ENCODE measurements at regions of chr3 and their contacts with region 1.

Region 1: GRCh38 chr3:18717598-18717997 is 292.5 kb upstream of the SATB1 start:
- DNase-seq: peak in 1 of 14 experiments; percentile 43
- ATAC-seq: no peak
- H3K4me3 ChIP-seq: no peak overlapping the region
- H3K4me3 Mint-ChIP-seq: peak overlapping the region; percentile 52
- H3K27ac ChIP-seq: no peak overlapping the region
- H3K27ac Mint-ChIP-seq: peak overlapping the region; percentile 65
- H3K4me1 ChIP-seq: peaks cover 38% of the 10 kb centered on the region
- H3K4me1 Mint-ChIP-seq: peaks cover 74% of the 10 kb centered on the region
- H3K27me3 ChIP-seq: no peaks in the 10 kb centered on the region
- H3K27me3 Mint-ChIP-seq: no peaks in the 10 kb centered on the region
- CTCF ChIP-seq: no peak

Region 2: GRCh38 chr3:18411541-18411940 is 306.1 kb before region 1 on chr3:
- CTCF ChIA-PET with region 1: no interaction called
- POLR2A ChIA-PET with region 1: no interaction called
- intact Hi-C with region 1: no loop called
- DNase-seq: peak in 3 of 14 experiments; percentile 43 to 62 (median 46)
- ATAC-seq: peak; percentile 72
- H3K4me3 ChIP-seq: no peak overlapping the region
- H3K4me3 Mint-ChIP-seq: peak overlapping the region; percentile 79
- H3K27ac ChIP-seq: peak overlapping the region in 1 of 2 donors; percentile 53
- H3K27ac Mint-ChIP-seq: peak overlapping the region; percentile 82
- H3K4me1 ChIP-seq: peaks cover 17% of the 10 kb centered on the region
- H3K4me1 Mint-ChIP-seq: peaks cover 89% of the 10 kb centered on the region
- H3K27me3 ChIP-seq: no peaks in the 10 kb centered on the region
- H3K27me3 Mint-ChIP-seq: no peaks in the 10 kb centered on the region
- CTCF ChIP-seq: no peak

Region 3: GRCh38 chr3:18740631-18741583 is 23.3 kb after region 1 on chr3:
- CTCF ChIA-PET with region 1: interaction called, 4 read pairs
- POLR2A ChIA-PET with region 1: interaction called, 11 read pairs
- intact Hi-C with region 1: no loop called
- DNase-seq: peak; percentile 15 to 92 (median 42)
- ATAC-seq: peak; percentile 76
- H3K4me3 ChIP-seq: peak overlapping the region; percentile 28
- H3K4me3 Mint-ChIP-seq: peak overlapping the region; percentile 76
- H3K27ac ChIP-seq: peak overlapping the region; percentile 46 to 87
- H3K27ac Mint-ChIP-seq: peak overlapping the region; percentile 90
- H3K4me1 ChIP-seq: peaks cover 38% of the 10 kb centered on the region
- H3K4me1 Mint-ChIP-seq: peaks cover 87% of the 10 kb centered on the region
- H3K27me3 ChIP-seq: no peaks in the 10 kb centered on the region
- H3K27me3 Mint-ChIP-seq: no peaks in the 10 kb centered on the region
- CTCF ChIP-seq: no peak

Region 4: GRCh38 chr3:18751514-18751913 is 33.9 kb after region 1 on chr3:
- CTCF ChIA-PET with region 1: no interaction called
- POLR2A ChIA-PET with region 1: interaction called, 4 read pairs
- intact Hi-C with region 1: loop called (anchors 5 kb)
- DNase-seq: no peak
- ATAC-seq: no peak
- H3K4me3 ChIP-seq: no peak overlapping the region
- H3K4me3 Mint-ChIP-seq: no peak overlapping the region
- H3K27ac ChIP-seq: no peak overlapping the region
- H3K27ac Mint-ChIP-seq: peak overlapping the region; percentile 65
- H3K4me1 ChIP-seq: no peaks in the 10 kb centered on the region
- H3K4me1 Mint-ChIP-seq: peaks cover 83% of the 10 kb centered on the region
- H3K27me3 ChIP-seq: no peaks in the 10 kb centered on the region
- H3K27me3 Mint-ChIP-seq: no peaks in the 10 kb centered on the region
- CTCF ChIP-seq: no peak

Region 5: DNA sequence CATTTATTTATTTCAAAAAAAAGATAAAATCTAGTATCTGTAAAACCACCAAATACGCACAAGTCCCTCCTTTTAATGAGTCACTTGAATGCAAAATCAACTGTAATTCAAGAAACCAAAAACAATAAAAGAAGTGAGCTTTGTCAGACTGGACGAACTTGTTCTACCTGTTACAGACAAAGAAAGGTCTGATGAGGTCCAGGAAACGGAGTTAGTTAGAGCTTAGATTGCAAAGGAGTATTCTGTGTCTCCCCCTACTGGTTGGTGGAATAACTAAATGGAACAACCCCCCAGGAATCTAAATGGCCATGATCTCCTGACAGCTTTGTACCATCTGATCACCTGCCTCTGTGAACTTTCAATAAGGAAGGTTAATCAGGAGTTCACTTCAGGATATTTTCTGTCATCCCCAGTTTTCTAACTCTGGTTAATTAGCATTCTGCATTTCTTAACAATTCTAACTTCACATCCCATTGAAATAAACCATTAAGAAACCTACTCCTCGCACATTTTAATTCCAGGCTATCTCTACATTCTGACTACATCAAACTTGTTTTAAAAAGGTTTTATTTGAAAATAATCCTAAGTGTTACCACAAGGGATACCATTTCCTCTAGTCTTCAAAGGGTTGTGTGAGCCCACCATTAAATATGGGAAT is 40.6 kb after region 1 on chr3:
- CTCF ChIA-PET with region 1: interaction called, 7 read pairs
- POLR2A ChIA-PET with region 1: interaction called, 3 read pairs
- intact Hi-C with region 1: loop called (anchors 5 kb)
- DNase-seq: peak in 7 of 14 experiments; percentile 3 to 90 (median 47)
- ATAC-seq: peak; percentile 97
- H3K4me3 ChIP-seq: no peak overlapping the region
- H3K4me3 Mint-ChIP-seq: peak overlapping the region; percentile 5
- H3K27ac ChIP-seq: no peak overlapping the region
- H3K27ac Mint-ChIP-seq: peak overlapping the region; percentile 21
- H3K4me1 ChIP-seq: no peaks in the 10 kb centered on the region
- H3K4me1 Mint-ChIP-seq: peaks cover 56% of the 10 kb centered on the region
- H3K27me3 ChIP-seq: no peaks in the 10 kb centered on the region
- H3K27me3 Mint-ChIP-seq: no peaks in the 10 kb centered on the region
- CTCF ChIP-seq: peak; percentile 83

Measured in CD4-positive, alpha-beta T cell (primary cell).